Cardiac septum (tissue), 1 donor: ENCODE measurements at regions of chrX and their contacts with region 1.

Region 1: GRCh38 chrX:66728818-66729271 is 90.0 kb upstream of the EDA2R start:
- DNase-seq: no peak

Region 2: GRCh38 chrX:65581661-65582339 is 1147.0 kb before region 1 on chrX:
- intact Hi-C with region 1: loop called (anchors 5 kb)
- DNase-seq: no peak

Region 3: GRCh38 chrX:66200855-66201795 is 527.7 kb before region 1 on chrX:
- intact Hi-C with region 1: loop called (anchors 10 kb)
- DNase-seq: no peak

Region 4: DNA sequence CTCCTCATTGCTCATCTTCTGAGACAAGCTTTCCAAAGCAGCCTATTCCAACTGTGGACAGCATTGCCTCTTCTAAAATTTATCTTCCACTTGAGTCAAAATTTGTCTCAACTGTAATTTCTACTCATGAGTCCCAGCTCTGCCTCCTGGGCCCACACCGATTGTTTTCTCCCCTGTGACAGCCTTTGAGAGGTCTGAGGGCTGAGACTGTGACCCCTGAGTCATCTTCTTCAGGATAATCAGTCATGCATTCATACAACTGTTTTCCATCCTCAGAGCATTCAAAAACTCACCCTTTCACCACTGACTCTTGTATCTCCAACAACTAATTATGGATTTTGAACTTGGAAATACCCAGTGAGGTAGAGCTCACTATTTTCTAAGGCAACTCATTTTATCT is 318.0 kb before region 1 on chrX:
- intact Hi-C with region 1: no loop called
- DNase-seq: no peak

Region 5: DNA sequence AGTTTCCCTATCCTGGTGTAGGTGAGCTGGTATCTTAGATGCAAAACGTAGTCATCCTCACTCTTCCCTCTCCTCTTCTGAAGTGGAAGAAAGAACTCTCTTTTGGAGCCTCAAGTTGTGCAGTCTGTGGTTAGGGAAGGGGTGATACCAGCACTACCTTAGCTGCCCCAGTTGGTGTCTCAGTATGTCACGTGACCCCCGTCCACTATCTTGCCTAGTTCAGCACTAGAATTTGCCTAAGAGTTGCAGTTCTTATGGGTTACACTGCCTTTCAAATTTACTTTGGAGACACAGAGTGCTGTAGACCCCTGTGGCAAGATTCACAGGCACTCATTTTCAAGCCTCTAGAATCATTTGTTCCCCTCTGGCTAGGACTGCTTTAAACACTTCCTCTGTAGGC is 232.8 kb after region 1 on chrX:
- intact Hi-C with region 1: no loop called
- DNase-seq: no peak